Activated naive CD4-positive, alpha-beta T cell treated with anti-CD3 and anti-CD28 coated beads for 36 hours (primary cell): ENCODE measurements at regions of chr6 and their contacts with region 1.

Region 1: DNA sequence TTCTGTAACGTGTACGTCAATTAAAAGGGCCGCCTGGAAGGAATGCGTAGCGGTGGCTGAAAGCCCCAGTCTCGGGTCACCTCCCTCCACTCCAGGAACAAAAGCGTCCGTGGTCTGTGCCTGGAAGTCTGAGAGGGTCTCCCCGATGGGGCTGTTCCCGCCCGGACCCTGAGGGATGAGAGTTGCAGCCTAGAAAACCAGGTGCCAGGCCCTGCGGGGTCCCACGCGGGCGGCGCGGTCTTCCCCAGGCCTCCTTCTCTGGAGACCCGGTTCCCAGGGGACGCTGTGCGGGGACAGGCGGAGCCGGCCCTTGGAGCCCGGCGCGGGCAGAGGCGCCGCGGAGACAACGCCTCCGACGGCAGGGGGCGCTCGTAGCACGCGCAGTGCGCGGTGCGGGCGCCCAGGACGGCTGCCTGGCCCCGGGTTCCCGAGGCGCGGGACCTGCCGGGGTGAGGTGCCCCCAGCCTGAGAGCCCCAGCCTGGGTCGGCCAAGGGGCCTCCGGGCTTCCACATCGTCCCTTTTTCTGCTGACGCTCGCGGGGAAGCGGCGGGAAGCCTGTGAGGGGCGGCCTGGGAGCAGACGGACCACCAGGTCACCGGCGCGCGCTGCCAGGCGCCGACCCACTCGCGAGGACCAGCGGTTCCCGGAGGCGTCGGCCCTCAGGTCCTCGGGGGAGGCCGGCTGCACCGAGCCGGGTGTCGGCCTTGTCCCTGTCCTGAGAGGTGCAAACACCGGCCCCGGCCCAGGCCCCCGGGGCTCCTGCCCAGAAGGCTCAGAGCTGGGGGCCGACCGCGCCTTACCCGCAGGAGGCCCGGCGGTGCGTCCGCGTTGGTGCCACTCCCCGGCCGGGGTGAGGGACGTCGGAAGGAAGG is 5.3 kb upstream of the FOXC1 start:
- DNase-seq: peak; percentile 60
- H3K4me3 Mint-ChIP-seq: no peak overlapping the region
- H3K27ac Mint-ChIP-seq: no peak overlapping the region
- H3K4me1 Mint-ChIP-seq: peaks cover 36% of the 10 kb centered on the region
- H3K27me3 Mint-ChIP-seq: peaks cover 77% of the 10 kb centered on the region

Region 2: GRCh38 chr6:1838604-1839213 is 234.3 kb after region 1 on chr6:
- CTCF ChIA-PET with region 1: no interaction called
- intact Hi-C with region 1: no loop called
- DNase-seq: no peak
- H3K4me3 Mint-ChIP-seq: no peak overlapping the region
- H3K27ac Mint-ChIP-seq: no peak overlapping the region
- H3K4me1 Mint-ChIP-seq: no peaks in the 10 kb centered on the region
- H3K27me3 Mint-ChIP-seq: no peaks in the 10 kb centered on the region

Region 3: DNA sequence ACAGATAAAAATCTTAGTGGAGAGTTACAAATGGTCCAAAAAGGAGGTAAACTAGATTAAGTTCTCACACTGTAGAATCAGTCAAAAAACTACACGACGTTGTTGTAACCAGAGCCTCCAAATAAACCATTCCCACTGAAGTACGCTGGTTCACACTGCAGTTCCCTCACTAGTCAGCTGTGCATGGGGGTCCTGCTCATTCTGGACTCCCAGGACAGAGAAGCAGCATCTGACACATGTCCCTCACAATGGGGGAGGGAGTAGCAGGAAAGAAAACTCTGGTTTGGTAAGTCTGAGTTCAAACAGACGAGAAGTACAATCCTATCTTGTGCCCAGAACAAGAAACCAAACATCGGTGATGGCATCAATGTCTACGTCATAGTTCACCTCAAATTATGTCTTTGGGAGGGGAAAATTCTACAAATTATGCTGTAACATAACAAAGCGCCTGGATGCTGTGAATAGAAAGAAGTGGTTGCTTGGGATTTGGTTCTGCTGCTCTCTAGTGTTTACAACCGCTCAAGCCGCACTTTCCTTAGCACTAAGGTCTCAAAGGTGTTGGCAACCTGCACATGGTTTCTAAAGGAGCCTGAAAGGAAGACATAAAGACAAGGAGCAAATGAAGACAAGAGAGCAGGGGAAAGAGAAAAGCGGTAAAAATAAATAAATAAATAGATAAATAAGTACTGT is 433.0 kb after region 1 on chr6:
- CTCF ChIA-PET with region 1: no interaction called
- intact Hi-C with region 1: loop called (anchors 2 kb)
- DNase-seq: peak; percentile 31
- H3K4me3 Mint-ChIP-seq: no peak overlapping the region
- H3K27ac Mint-ChIP-seq: no peak overlapping the region
- H3K4me1 Mint-ChIP-seq: peaks cover 25% of the 10 kb centered on the region
- H3K27me3 Mint-ChIP-seq: peaks cover 5% of the 10 kb centered on the region

Region 4: GRCh38 chr6:2103644-2104523 is 499.5 kb after region 1 on chr6:
- CTCF ChIA-PET with region 1: interaction called, 7 read pairs
- intact Hi-C with region 1: loop called (anchors 1 kb)
- DNase-seq: no peak
- H3K4me3 Mint-ChIP-seq: no peak overlapping the region
- H3K27ac Mint-ChIP-seq: no peak overlapping the region
- H3K4me1 Mint-ChIP-seq: no peaks in the 10 kb centered on the region
- H3K27me3 Mint-ChIP-seq: no peaks in the 10 kb centered on the region

Region 5: DNA sequence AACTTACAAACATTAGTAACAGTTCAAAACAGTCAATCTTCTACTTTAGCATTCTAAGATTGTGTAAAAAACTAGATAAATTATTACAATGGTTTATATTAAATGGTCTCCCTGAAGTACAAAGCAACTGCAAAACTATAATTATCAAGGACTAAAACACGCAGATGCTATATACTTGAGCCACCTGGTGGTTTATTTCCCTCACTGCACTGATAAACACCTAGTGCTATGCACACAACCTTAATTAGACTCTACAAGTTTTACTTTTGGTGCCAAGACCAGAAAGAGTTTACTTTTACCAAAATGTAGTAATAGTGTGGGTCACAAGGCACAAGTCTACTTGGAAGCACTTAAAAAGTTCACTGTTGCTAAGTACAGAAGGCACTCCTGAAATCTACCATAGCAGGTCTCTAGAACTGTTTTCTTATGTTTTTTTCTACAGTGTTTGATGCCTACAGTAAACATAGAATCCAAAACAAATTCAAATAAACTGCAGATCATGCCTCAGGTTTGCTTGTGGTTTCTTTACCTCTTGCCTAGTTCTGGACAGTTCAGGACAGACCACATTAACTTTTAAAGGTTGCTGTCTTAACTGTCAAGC is 591.8 kb after region 1 on chr6:
- CTCF ChIA-PET with region 1: no interaction called
- intact Hi-C with region 1: loop called (anchors 1 kb)
- DNase-seq: peak; percentile 56
- H3K4me3 Mint-ChIP-seq: no peak overlapping the region
- H3K27ac Mint-ChIP-seq: no peak overlapping the region
- H3K4me1 Mint-ChIP-seq: no peaks in the 10 kb centered on the region
- H3K27me3 Mint-ChIP-seq: no peaks in the 10 kb centered on the region

Region 6: GRCh38 chr6:2353412-2354137 is 749.2 kb after region 1 on chr6:
- CTCF ChIA-PET with region 1: interaction called, 11 read pairs
- intact Hi-C with region 1: loop called (anchors 1 kb)
- DNase-seq: peak; percentile 84
- H3K4me3 Mint-ChIP-seq: no peak overlapping the region
- H3K27ac Mint-ChIP-seq: no peak overlapping the region
- H3K4me1 Mint-ChIP-seq: no peaks in the 10 kb centered on the region
- H3K27me3 Mint-ChIP-seq: no peaks in the 10 kb centered on the region

Region 7: DNA sequence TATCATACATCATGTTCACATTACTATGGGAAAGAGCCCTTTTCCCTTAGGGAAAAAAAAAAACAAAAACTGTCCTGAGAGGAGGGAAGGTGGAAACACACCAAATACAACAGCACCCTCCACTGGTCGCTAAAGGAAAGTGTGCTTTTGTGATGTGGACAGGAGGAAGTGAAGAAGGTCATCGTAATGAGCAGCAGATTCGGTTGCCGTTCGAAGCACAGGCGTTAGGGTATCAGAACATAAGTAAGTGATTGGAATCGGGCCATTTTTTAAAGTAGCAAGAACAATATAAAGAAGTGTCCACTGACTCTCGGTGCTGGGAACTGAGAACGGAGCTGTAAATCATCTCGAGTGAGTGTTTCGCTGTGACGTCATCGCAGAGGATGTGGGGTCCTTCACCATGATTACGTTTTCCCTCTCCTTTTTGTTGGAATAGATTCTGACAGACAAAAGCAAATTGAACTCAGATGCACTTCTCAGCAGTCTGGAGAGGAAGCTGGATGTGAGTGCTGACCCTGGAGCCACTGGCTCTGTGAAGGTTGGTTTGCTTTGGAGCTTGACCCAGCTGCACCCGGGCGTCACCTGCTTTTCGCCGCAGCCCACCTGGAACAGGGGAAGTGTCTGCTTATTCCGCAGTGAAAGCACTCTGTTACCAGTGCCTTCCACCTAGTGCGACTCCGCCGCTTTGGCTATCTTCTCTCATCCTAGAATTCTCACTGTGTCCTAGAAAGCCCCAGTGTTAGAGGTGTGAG is 844.6 kb after region 1 on chr6:
- CTCF ChIA-PET with region 1: no interaction called
- intact Hi-C with region 1: loop called (anchors 2 kb)
- DNase-seq: peak; percentile 48
- H3K4me3 Mint-ChIP-seq: peak overlapping the region; percentile 28
- H3K27ac Mint-ChIP-seq: no peak overlapping the region
- H3K4me1 Mint-ChIP-seq: peaks cover 5% of the 10 kb centered on the region
- H3K27me3 Mint-ChIP-seq: no peaks in the 10 kb centered on the region